ENCODE measurements at regions of chr11 and their contacts with region 1.

Region 1: DNA sequence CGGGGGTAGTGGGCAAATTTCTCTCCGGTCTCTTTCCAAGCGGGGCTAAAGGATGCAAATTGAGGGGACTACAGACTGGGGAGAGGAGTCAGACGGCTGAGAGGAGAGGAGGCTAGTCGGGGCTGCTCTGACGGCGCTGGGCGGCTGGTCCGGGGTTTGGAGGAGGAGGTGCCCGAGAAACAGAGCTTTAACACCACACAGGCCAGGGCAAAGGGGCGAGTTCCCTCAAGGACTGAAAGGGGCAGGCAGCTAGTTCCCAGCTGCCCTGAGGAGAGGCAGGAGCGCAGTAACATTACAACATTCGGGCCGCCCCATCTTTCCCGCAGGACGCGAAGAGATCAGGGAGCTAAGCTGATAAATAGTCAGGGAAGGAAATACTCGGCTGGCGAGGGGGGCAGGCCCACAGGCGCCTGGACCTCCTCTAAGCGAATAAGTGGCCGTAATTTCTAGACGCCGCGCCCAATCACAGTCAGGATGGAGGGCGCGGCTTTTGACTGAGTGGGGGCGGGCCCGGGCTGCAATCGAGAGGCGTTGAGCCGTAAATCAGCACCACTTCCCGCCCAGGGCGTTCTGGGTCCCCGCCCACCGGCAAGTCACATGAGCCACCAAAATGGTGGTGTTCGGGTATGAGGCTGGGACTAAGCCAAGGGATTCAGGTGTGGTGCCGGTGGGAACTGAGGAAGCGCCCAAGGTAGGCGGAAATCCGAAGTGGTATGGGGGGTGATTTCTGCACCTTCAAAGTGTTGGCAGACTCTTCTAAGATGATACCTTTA is at the start of gene TMEM126B:
- DNase-seq: peak; percentile 84
- H3K4me3 ChIP-seq: peak within 1 kb of the TSS; percentile 72 to 87
- H3K27ac ChIP-seq: peak within 1 kb of the TSS; percentile 68 to 84
- H3K4me1 ChIP-seq: peaks cover 0 to 3% of the 10 kb centered on the region in 2 experiments; a peak in 3 of 4 replicates
- H3K27me3 ChIP-seq: no peaks in the 10 kb centered on the region
- CTCF ChIP-seq: no peak
- EP300 ChIP-seq: no peak; a peak in 1 of 4 replicates
- RAD21 ChIP-seq: no peak
- polyA plus RNA-seq, gene TMEM126B: 27.7 and 45.0 TPM in 2 replicates

Region 2: DNA sequence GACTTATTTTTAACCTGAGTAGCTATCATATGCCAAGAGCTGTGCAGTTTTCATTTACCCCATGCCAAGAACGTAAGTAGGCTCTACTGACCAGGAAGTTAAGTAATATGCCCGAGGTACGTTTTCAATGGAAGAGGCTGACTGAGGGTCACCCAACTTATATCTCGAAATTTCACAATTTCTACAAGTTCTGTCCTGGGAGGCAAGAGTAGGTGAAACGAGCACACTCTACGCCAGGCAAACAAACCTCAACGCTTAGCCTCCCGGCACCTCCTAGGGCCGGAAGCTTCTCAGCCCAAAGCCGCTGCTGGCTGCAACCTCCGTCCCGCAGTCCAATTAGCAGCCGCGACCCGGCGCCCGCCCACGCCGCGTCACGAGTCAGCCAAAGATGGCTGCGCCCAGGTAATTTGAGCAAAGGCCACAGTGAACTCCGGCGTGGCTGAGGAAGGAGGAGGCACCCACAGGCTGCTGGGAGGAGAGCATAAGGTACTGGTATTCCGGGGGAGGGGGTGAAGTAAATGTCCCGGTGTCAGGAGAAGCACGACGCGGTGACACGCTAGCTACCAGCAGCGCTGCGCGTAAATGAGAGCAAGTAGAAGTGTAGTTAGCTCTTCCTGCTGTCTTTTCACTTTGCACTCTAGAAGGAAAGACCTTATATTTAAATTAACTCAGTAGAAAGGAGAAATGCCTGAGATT is 19.6 kb after region 1 on chr11 and contains the start of gene TMEM126A:
- CTCF ChIA-PET with region 1: no interaction called
- POLR2A ChIA-PET with region 1: interaction called, 16 read pairs
- DNase-seq: peak; percentile 84
- H3K4me3 ChIP-seq: peak within 1 kb of the TSS; percentile 75 to 91
- H3K27ac ChIP-seq: peak within 1 kb of the TSS; percentile 61 to 88
- H3K4me1 ChIP-seq: peaks cover 7 to 17% of the 10 kb centered on the region in 2 experiments; a peak in 3 of 4 replicates
- H3K27me3 ChIP-seq: no peaks in the 10 kb centered on the region
- CTCF ChIP-seq: no peak
- EP300 ChIP-seq: 0 out of 4 replicates have a peak, but pooled peaks of 1 of the 2 experiments have one; percentile 8
- RAD21 ChIP-seq: no peak; the same call in 1 of the 2 replicates
- polyA plus RNA-seq, gene TMEM126A: 30.5 and 37.1 TPM in 2 replicates

Region 3: GRCh38 chr11:85977751-85978160 is 349.6 kb after region 1 on chr11:
- CTCF ChIA-PET with region 1: no interaction called
- POLR2A ChIA-PET with region 1: no interaction called
- DNase-seq: no peak
- H3K4me3 ChIP-seq: no peak overlapping the region
- H3K27ac ChIP-seq: no peak overlapping the region; a peak in 1 of 4 replicates
- H3K4me1 ChIP-seq: no peaks in the 10 kb centered on the region
- H3K27me3 ChIP-seq: no peaks in the 10 kb centered on the region
- CTCF ChIP-seq: no peak
- EP300 ChIP-seq: no peak
- RAD21 ChIP-seq: no peak